HAP-1 (cell line): ENCODE measurements at regions of chr5 and their contacts with region 1.

Region 1: GRCh38 chr5:93596676-93597461 is 13.8 kb downstream of the NR2F1 start:
- DNase-seq: no peak
- H3K4me3 ChIP-seq: no peak overlapping the region
- H3K4me1 ChIP-seq: peaks cover 21% of the 10 kb centered on the region
- H3K27me3 ChIP-seq: no peaks in the 10 kb centered on the region

Region 2: DNA sequence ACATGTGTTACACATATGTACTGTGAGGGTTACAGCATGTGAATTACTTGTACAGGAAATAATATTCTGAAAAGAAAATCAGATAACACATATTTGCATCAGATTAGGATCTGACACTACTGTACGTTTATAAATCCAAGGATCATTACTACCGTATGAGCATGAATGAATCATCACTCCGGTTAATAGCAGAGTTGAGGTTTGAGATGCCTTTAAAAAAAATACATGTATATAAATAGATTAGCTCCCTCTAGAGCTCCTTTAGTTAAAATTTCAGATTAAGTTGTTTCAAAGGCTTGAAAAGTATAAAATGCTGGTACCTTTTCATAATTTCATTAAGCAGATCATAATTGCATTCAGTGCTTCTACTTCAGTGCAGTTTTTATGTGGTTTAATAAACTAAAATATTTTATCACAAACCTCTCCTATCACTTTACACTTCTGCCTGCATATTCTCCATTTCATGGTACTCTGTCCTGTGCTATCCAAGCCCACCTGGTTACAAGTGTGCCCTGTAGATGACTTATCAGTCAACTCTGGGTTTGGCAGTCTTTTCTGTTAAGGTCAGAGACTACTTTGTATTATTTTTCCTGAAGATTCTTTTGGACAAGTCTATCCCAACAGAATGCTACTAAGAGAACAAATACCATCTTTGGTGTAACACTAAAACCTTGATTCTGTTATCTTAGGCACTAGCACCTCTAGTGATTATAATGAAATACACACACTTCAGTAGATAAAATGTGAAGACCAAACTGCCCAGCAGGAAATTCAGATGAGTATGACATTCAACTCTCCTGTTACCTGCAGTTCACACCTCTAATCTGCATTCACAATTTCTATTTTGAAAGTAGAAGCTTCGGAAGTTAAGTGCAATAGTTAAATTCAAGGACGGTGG is 192.6 kb after region 1 on chr5:
- in situ Hi-C with region 1: loop called (anchors 10 kb)
- DNase-seq: no peak
- H3K4me3 ChIP-seq: no peak overlapping the region
- H3K4me1 ChIP-seq: no peaks in the 10 kb centered on the region
- H3K27me3 ChIP-seq: no peaks in the 10 kb centered on the region